Activated CD4-positive, alpha-beta T cell treated with anti-CD3 and anti-CD28 coated beads, Interleukin-2, amount 10 ng/mL, durations not matched to agents 7 days and 5 days (primary cell): ENCODE measurements at regions of chr14 and their contacts with region 1.

Region 1: DNA sequence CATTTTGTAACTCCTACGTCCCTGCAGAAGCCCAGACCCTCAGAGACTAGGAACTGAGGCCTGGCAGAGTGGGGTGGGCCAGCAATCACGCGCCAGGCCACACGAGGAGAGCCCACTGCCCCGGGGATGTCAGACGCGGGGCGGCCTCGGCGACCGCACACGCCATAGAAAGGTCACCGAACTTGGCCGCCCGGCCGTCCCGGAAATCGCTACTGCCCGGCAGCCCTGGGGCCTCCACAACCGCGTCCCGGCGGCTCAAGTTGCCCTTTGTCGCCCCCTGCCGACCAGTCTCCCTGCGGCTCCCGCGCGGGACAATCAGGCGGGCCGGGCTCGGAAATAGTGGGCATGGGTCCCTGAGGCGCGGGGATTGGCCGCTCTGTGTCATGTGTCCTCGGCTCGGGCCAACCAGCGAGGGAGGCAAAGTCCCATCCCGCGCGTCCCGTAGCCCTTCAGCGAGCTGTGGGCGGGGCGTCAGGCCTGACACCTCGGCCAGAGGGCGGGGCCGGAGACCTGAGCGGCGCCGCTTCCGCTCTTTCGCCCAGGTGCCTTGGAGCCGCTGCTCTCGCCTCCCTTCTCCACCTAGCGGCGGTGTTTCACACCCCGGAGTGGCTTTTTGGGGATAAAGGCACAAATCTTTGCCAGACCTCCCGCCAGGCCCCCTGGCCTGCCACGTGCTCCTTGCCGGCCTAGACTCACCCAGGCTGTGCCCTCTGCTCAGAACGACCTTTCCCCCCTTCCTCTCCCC is 33.4 kb upstream of the DEGS2 start:
- DNase-seq: peak; percentile 100
- H3K4me3 Mint-ChIP-seq: peak overlapping the region; percentile 59
- H3K27ac Mint-ChIP-seq: peak overlapping the region; percentile 95
- H3K4me1 Mint-ChIP-seq: peaks cover 12% of the 10 kb centered on the region
- H3K27me3 Mint-ChIP-seq: no peaks in the 10 kb centered on the region

Region 2: DNA sequence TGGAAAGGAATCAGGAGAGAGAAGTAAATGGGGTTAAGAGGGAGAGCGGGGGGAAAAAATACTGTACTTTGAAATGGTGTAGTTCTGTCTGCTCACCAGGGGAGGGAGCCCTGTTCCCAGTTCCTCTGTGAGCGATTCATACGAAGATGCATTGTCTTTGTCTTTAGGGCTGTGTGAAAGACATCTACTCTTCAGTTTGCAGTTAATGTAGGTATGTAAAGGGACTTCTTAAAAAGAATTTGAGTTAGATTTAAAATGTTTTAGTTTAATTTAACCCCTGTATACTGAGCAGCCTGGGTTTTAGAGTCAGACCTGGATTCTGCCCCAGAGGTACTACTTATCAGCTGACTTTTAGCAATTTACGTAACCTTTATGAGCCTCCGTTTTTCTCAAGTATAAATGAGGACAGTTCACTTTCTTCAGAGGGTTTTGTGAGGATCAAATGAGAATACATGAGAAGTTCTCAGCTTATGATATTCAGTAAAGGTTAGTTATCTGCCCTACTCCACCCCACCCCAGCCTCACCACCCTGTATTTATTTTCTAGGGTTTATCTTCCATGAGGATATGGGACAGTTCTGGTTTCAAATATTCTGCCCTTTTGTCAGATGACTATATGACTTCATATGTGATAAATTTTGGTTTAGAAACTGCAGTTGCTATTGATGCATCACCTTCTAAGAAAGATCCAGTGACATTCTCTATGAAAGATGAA is 210.2 kb before region 1 on chr14:
- CTCF ChIA-PET with region 1: interaction called, 13 read pairs
- POLR2A ChIA-PET with region 1: no interaction called
- DNase-seq: peak; percentile 74
- H3K4me3 Mint-ChIP-seq: no peak overlapping the region
- H3K27ac Mint-ChIP-seq: no peak overlapping the region
- H3K4me1 Mint-ChIP-seq: peaks cover 20% of the 10 kb centered on the region
- H3K27me3 Mint-ChIP-seq: no peaks in the 10 kb centered on the region

Region 3: GRCh38 chr14:100078991-100079725 is 113.7 kb before region 1 on chr14:
- CTCF ChIA-PET with region 1: interaction called, 14 read pairs
- POLR2A ChIA-PET with region 1: no interaction called
- DNase-seq: peak; percentile 93
- H3K4me3 Mint-ChIP-seq: peak overlapping the region; percentile 78
- H3K27ac Mint-ChIP-seq: peak overlapping the region; percentile 90
- H3K4me1 Mint-ChIP-seq: peaks cover 97% of the 10 kb centered on the region
- H3K27me3 Mint-ChIP-seq: no peaks in the 10 kb centered on the region

Region 4: DNA sequence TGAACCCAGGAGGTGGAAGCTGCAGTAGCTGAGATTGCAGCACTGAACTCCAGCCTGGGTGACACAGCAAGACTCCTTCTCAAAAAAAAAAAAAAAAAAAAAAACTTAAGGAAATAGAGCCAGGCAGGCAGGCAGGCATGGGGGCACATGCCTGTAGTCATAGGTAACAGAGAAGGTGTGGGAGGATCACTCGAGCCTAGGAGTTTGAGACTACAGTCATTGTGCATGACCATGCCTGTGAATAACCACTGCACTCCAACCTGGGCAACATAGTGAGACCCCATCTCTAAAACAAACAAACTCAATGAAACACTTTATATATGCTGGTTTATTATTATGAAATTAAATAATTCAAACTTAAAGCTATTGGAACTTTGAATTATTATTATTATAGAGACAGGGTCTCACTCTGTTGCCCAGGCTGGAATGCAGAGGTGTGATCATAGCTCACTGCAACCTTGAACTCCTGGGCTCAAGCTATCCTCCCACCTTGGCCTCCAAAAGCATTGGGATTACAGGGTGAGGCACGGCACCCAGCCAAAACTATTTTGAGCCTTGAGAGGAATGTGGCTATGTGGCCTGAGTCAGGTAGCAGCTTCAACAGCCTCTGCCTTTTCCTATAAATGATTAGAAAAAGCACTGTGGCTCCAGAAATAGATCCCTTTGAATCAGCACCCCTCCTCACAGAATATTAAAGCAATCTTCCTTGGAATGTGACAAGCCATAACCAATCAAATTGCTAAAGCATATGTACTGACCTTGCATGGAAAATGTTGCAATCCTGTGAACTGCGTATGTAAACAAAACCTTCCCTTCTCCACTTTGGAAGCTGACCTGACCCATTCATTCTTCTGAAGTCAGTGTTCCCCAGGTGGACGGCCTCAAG is 11.3 kb after region 1 on chr14:
- CTCF ChIA-PET with region 1: interaction called, 41 read pairs
- POLR2A ChIA-PET with region 1: no interaction called
- DNase-seq: no peak
- H3K4me3 Mint-ChIP-seq: no peak overlapping the region
- H3K27ac Mint-ChIP-seq: no peak overlapping the region
- H3K4me1 Mint-ChIP-seq: no peaks in the 10 kb centered on the region
- H3K27me3 Mint-ChIP-seq: no peaks in the 10 kb centered on the region

Region 5: DNA sequence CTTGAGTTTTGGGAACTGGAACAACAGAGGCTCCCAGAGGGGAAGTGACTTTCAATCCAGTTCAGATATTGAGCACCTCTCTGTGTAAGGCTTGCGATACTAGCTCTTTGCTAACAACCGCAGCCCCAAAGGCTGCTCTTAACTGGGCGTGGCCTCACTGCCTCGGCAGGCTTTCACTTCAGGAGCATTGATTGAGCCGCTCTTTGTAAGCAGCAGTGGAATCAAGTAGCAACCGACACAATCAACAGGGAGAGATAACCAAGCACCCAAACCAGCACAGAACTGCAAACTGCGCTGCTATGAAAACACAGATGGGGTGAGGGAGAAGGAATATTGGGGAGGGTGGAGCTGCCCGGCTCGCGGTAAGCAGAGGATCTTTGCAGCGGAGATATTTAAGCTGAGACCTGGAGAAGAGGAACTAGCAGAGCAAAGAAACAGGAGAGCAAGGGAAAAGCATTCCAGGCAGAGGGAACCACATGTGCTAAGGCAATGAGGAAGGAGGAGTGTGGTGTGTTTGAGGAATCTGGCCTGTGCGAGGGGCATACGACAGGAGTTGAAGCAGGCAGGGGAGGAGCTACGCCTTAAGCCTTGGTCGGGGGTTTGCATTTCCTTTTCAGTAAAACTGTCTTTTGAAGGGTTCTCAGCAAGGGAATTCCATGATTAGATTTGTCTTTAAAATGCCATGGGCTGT is 28.8 kb after region 1 on chr14:
- CTCF ChIA-PET with region 1: interaction called, 55 read pairs
- POLR2A ChIA-PET with region 1: no interaction called
- DNase-seq: peak; percentile 84
- H3K4me3 Mint-ChIP-seq: no peak overlapping the region
- H3K27ac Mint-ChIP-seq: no peak overlapping the region
- H3K4me1 Mint-ChIP-seq: peaks cover 23% of the 10 kb centered on the region
- H3K27me3 Mint-ChIP-seq: no peaks in the 10 kb centered on the region